ENCODE measurements at regions of chr12 and their contacts with region 1.

Region 1: GRCh38 chr12:97404543-97404942 is 58.1 kb upstream of the RMST start:
- DNase-seq: peak; percentile 47
- CTCF ChIP-seq: peak; percentile 75

Region 2: DNA sequence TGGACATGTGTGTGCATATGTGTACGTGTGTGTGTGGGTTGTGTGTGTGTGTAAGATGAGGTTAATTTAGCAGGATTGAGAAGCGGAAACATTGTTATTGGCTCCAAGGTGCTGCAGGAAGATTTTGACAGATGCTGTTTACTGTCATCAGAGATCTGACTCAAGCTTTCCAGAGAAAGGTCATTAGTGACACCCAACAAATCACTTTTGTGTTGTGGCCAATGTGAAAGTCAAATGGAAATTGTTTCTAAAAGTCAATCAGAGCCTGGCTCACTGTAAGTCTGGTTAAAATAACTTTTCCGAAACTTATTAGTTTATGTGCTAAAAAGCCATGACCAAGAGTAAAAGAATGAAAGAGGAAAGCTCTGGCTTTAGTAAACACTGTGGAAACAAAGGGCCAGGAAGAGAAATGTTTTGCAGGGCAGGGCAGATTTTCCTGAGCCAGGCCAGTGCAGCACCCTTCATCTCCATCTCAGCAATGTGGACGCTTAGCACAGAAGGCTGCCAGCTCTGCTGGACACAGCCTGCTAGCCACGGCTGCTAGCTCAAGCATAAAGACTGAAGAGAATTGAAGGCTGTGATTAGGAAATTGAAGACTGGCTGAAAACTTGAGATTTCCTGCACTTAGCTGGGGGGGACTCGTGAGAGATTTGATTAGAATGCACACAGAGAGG is 261.7 kb before region 1 on chr12:
- CTCF ChIA-PET with region 1: interaction called, 13 read pairs
- POLR2A ChIA-PET with region 1: no interaction called
- DNase-seq: no peak
- CTCF ChIP-seq: no peak

Region 3: GRCh38 chr12:97380440-97380839 is 24.1 kb before region 1 on chr12:
- CTCF ChIA-PET with region 1: interaction called, 28 read pairs
- POLR2A ChIA-PET with region 1: no interaction called
- DNase-seq: no peak
- CTCF ChIP-seq: no peak

Region 4: GRCh38 chr12:97414855-97415254 is 10.3 kb after region 1 on chr12:
- CTCF ChIA-PET with region 1: interaction called, 28 read pairs
- POLR2A ChIA-PET with region 1: no interaction called
- DNase-seq: no peak
- CTCF ChIP-seq: no peak

Measured in GM10248 (cell line).